ENCODE measurements at regions of chr6 and their contacts with region 1.

Region 1: GRCh38 chr6:31403283-31403989 is at the start of gene MICA:
- DNase-seq: peak; percentile 96 to 99 (median 98)
- ATAC-seq: peak; percentile 86
- H3K4me3 ChIP-seq: peak within 1 kb of the TSS; percentile 50
- H3K27ac ChIP-seq: peak within 1 kb of the TSS; percentile 24
- H3K4me1 ChIP-seq: peaks cover 29 to 31% of the 10 kb centered on the region in 2 experiments; a peak in 4 of 5 replicates
- H3K27me3 ChIP-seq: no peaks in the 10 kb centered on the region
- CTCF ChIP-seq: no peak; a peak in 1 of 6 replicates
- EP300 ChIP-seq: no peak
- POLR2A ChIP-seq: peak; percentile 81
- RAD21 ChIP-seq: no peak
- polyA plus RNA-seq, gene MICA: 13.5 to 18.0 TPM

Region 2: DNA sequence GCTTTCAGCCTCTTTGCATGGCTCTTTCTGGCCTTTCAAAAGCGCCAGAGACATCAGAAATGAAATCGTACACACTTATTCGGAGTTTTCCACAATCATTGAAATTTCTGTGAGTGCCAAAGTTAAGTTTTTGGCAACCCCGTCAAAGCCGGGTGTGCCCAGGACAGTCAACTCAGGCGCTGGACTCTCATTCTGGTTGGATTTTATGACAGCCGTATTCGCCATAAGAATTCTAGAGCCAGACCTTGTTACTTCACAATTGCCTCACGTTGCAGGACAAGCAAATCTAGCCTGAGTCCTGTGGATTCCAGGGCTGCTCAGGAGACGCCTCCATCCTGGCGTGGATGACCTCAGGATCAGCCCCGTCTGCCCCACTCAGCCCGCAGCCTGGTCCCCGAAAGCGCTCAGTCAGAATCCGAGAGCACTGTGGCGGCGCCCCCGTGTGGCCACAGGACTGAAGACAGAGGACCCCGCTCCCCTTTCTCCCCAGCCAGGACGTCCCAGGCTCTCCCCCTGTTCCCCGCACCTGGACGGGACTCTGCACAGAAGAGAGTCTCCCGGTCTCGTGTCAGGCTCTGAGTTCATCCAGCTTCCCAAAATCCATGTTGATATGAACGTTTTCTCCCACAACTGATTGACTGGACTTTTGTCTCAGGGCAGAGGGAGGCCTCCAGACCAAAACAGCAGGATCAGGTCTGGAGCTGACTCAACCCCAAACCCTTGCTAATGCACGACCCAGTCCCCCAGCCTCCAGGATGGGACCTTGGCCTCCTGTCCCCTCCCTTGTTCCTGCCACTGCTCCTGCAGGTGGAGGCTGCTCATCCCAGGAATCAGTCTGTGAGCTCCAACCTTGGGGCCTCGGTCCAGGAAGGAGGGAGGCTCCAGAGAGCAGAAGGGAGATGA is 38.2 kb after region 1 on chr6:
- CTCF ChIA-PET with region 1: interaction called, 68 read pairs
- POLR2A ChIA-PET with region 1: interaction called, 8 read pairs
- in situ Hi-C with region 1: loop called (anchors 5 kb)
- intact Hi-C with region 1: loop called (anchors 1 kb)
- DNase-seq: peak; percentile 81 to 88 (median 84)
- ATAC-seq: peak; percentile 99
- H3K4me3 ChIP-seq: no peak overlapping the region
- H3K27ac ChIP-seq: no peak overlapping the region
- H3K4me1 ChIP-seq: peaks cover 0 to 6% of the 10 kb centered on the region in 2 experiments; a peak in 2 of 5 replicates
- H3K27me3 ChIP-seq: peaks cover 6 to 20% of the 10 kb centered on the region in 2 experiments
- CTCF ChIP-seq: peak; percentile 89 to 93 (median 91)
- EP300 ChIP-seq: no peak
- POLR2A ChIP-seq: no peak
- RAD21 ChIP-seq: peak; percentile 86 to 94

Region 3: GRCh38 chr6:31485055-31485454 is 81.6 kb after region 1 on chr6:
- CTCF ChIA-PET with region 1: interaction called, 3 read pairs
- POLR2A ChIA-PET with region 1: interaction called, 3 read pairs
- in situ Hi-C with region 1: no loop called
- intact Hi-C with region 1: loop called (anchors 2 kb)
- DNase-seq: no peak
- ATAC-seq: no peak
- H3K4me3 ChIP-seq: no peak overlapping the region
- H3K27ac ChIP-seq: no peak overlapping the region
- H3K4me1 ChIP-seq: peaks cover 1 to 5% of the 10 kb centered on the region in 2 experiments; a peak in 4 of 5 replicates
- H3K27me3 ChIP-seq: peaks cover 10 to 17% of the 10 kb centered on the region in 2 experiments; a peak in 4 of 5 replicates
- CTCF ChIP-seq: no peak
- EP300 ChIP-seq: no peak
- POLR2A ChIP-seq: no peak
- RAD21 ChIP-seq: no peak

Region 4: GRCh38 chr6:31639449-31639861 is 236.0 kb after region 1 on chr6:
- CTCF ChIA-PET with region 1: no interaction called
- POLR2A ChIA-PET with region 1: no interaction called
- in situ Hi-C with region 1: no loop called
- intact Hi-C with region 1: no loop called
- DNase-seq: no peak
- ATAC-seq: no peak
- H3K4me3 ChIP-seq: no peak overlapping the region
- H3K27ac ChIP-seq: no peak overlapping the region
- H3K4me1 ChIP-seq: peaks cover 3 to 13% of the 10 kb centered on the region in 2 experiments; a peak in 4 of 5 replicates
- H3K27me3 ChIP-seq: no peaks in the 10 kb centered on the region
- CTCF ChIP-seq: no peak
- EP300 ChIP-seq: no peak
- POLR2A ChIP-seq: no peak
- RAD21 ChIP-seq: no peak

Measured in K562 (cell line).